ENCODE measurements at regions of chr3 and their contacts with region 1.

Region 1: GRCh38 chr3:54853573-54854404 is 74.1 kb downstream of the LRTM1 start:
- DNase-seq: peak; percentile 76
- ATAC-seq: peak; percentile 55
- H3K4me3 Mint-ChIP-seq: no peak overlapping the region
- H3K27ac Mint-ChIP-seq: no peak overlapping the region
- H3K4me1 Mint-ChIP-seq: no peaks in the 10 kb centered on the region
- H3K27me3 Mint-ChIP-seq: peaks cover 1% of the 10 kb centered on the region

Region 2: DNA sequence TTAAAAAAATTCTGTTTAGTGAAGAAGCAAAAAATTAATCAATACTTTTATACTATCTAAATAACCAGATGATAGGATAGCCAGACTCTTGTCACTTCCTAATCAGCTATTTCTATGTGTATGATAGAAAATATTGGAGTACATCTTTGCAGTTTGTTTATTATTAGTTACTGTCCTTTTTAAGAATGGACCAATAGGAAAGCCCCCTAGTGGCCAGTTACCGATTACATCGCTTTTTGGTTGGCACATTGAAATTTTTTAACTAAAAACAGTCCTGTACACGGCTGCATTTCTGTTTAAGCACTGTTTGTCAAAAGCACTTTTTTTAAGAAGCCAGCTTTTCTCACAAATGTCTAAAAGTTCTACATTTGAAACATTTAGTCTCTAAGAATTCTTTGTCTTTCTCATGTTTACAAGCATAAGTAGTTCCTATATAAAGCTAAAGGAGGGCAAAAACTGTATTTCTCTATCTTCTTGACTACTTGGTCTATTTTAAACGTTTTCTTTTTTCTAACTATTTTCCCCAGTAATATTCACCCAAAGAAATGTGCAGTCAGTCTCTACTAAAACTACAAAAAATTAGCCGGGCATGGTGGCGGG is 327.2 kb after region 1 on chr3:
- CTCF ChIA-PET with region 1: no interaction called
- POLR2A ChIA-PET with region 1: no interaction called
- intact Hi-C with region 1: loop called (anchors 2 to 5 kb)
- DNase-seq: peak; percentile 25
- ATAC-seq: no peak
- H3K4me3 Mint-ChIP-seq: no peak overlapping the region
- H3K27ac Mint-ChIP-seq: no peak overlapping the region
- H3K4me1 Mint-ChIP-seq: no peaks in the 10 kb centered on the region
- H3K27me3 Mint-ChIP-seq: peaks cover 3% of the 10 kb centered on the region

Region 3: GRCh38 chr3:55405436-55405835 is 551.6 kb after region 1 on chr3:
- CTCF ChIA-PET with region 1: no interaction called
- POLR2A ChIA-PET with region 1: no interaction called
- intact Hi-C with region 1: loop called in 1 of 2 experiments (anchors 1 kb)
- DNase-seq: peak; percentile 39
- ATAC-seq: no peak
- H3K4me3 Mint-ChIP-seq: no peak overlapping the region
- H3K27ac Mint-ChIP-seq: no peak overlapping the region
- H3K4me1 Mint-ChIP-seq: no peaks in the 10 kb centered on the region
- H3K27me3 Mint-ChIP-seq: no peaks in the 10 kb centered on the region

Region 4: DNA sequence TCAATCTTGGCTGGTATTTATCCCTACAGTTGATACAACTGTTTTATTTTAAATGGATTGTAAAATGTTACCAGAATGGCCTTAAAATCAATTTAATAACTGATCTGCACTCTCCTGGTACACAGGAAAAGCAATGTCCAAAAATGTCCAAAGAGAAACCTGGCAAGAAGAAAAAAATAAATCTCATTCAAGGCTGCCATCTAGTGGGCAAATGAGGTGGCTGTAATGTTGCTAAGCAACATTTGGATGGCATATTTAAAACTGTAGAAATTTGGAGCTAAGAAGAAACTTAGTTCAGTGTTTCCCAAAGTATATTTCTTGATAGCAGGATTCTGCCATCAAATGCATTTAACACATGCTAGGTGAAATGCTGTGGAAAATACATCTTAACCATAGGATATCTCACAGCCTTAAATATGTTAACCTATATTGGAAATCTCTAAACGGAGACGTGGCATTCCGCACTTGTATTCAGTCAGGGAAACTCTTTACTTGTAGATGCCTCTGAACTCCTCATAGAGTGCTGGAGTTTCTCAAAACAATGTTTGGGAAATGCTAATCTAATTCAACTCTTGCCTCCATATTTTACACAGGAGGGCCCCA is 1397.7 kb after region 1 on chr3:
- CTCF ChIA-PET with region 1: no interaction called
- POLR2A ChIA-PET with region 1: no interaction called
- intact Hi-C with region 1: loop called in 1 of 2 experiments (anchors 1 kb)
- DNase-seq: peak; percentile 43
- ATAC-seq: no peak
- H3K4me3 Mint-ChIP-seq: no peak overlapping the region
- H3K27ac Mint-ChIP-seq: no peak overlapping the region
- H3K4me1 Mint-ChIP-seq: no peaks in the 10 kb centered on the region
- H3K27me3 Mint-ChIP-seq: peaks cover 3% of the 10 kb centered on the region